Ovary (tissue), 10 donors: ENCODE measurements at regions of chr7 and their contacts with region 1.

Region 1: DNA sequence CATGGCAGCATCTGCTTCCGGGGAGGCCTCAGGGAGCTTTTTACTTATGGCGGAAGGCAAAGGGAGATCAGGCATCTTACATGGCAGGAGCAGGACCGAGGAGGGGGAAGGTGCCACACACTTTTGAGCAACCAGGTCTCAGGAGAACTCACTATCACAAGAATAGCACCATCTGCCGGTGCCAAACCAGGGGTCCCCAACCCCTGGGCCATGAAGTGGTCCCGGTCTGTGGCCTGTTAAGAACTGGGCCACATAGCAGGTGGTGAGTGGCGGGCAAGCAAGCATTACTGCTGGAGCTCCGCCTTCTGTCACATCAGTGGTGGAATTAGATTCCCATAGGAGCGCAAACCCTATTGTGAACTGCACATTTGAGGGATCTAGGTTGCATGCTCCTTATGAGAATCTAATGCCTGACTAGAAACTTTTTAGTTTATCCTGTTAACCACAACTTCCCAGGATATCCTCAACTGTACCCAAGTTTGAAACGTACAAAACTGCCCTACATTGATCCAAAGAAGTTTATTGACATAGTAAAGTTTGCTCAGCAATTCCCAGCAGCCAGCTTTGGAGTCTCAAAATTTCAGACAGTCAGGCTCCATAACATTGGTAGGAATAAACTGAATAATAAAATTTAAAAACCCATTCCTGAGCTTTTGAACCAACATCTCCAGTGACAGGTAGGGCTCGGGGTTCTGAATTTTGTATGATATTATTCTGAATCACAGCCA is 228.4 kb upstream of the TAC1 start:
- DNase-seq: no peak
- H3K4me3 ChIP-seq: no peak overlapping the region
- H3K27ac ChIP-seq: no peak overlapping the region
- H3K4me1 ChIP-seq: no peaks in the 10 kb centered on the region
- H3K27me3 ChIP-seq: no peaks in the 10 kb centered on the region
- CTCF ChIP-seq: no peak
- EP300 ChIP-seq: no peak
- POLR2A ChIP-seq: no peak

Region 2: DNA sequence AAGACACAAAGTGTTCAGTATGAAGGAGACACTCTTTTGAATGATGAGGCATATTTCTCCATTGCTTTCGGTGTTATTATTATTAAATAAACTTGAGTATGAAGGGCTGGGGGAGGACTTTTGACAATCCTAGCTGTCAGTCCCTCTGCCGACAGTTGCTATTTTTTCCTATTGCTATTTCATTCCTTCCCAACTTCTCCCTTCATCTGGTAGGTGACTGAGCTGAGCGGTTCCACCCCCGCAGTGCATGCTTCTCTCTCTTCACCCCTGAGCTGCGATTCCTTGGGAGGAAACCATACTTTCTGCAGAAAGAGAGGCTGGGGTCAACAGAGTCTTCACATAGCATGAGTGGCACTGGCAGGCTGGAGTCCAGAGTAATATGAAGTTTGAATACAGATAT is 32.8 kb before region 1 on chr7:
- intact Hi-C with region 1: loop called in 1 of 4 experiments (anchors 1 kb)
- DNase-seq: no peak
- H3K4me3 ChIP-seq: no peak overlapping the region
- H3K27ac ChIP-seq: no peak overlapping the region
- H3K4me1 ChIP-seq: no peaks in the 10 kb centered on the region
- H3K27me3 ChIP-seq: no peaks in the 10 kb centered on the region
- CTCF ChIP-seq: no peak
- EP300 ChIP-seq: no peak
- POLR2A ChIP-seq: no peak